ENCODE measurements at regions of chr15 and their contacts with region 1.

Region 1: DNA sequence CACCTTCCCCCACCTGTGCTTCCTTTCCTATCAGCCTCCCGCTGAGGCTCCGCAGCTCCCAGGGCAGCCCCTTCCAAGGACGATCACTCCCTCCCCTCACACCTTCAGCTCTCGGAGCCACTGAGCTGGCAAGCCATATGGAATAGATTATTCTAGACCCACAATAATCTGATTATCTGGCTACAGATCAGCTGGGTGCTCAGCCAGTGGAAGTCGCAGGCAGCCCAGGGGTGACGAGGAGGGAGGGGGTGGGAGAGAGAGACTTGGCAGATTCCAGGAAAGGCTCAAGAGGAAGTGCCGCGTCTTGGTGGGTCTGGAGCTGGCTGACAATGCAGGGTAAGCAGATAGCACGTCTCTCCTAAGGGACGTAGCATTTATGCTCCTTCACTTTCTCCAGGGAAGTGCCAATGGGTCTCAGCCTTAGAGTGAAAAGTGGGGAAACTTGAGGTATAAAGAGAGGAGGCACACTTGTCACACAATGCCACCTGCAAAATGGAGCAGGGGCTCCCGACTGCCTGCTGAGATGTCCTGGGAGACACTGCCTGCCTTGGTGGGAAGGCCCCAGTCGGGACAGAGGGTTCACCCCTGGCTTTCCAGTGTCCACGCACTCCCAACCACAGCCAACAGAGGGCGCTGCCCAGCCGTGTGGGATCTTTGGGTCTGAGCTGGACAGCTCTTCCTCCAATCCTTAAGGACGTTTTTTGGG is 9.4 kb upstream of the MESP1 start:
- DNase-seq: peak; percentile 72 to 90 (median 81)
- H3K4me3 ChIP-seq: no peak overlapping the region
- H3K27ac ChIP-seq: no peak overlapping the region
- H3K4me1 ChIP-seq: no peaks in the 10 kb centered on the region
- H3K27me3 ChIP-seq: no peaks in the 10 kb centered on the region
- CTCF ChIP-seq: peak; percentile 91 to 96 (median 94)
- POLR2A ChIP-seq: no peak

Region 2: DNA sequence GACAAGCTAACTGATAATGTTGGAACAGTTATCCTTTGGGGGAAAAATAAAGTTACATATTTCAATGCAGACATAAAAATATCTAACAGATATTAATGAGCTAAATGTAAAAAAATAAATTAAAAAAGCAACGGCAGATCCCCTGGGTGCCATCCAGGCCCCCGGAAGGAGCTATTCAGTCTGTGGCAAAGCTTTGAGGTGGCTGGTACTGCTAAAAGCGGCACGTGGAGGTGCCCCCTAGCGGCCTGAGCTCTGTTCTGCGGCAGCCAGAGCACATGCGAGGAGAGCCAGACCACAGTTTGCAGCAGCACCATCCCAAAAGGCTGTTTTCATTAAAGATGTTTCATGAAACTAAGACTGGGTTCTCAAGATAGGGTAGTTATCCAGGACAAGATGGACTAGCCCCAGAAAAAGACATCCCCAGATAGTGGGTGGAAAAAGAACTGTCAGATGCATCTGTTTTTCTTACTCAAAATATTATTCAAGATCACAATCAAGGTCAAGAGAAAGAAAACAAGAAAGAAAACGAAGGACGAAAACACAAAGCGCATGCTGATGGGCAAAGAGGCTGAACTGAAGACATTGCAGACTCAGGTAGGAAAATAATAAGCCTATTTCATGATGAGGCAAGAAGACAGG is 114.6 kb after region 1 on chr15:
- intact Hi-C with region 1: loop called (anchors 2 to 5 kb)
- DNase-seq: peak; percentile 77 to 92 (median 85)
- H3K4me3 ChIP-seq: no peak overlapping the region
- H3K27ac ChIP-seq: no peak overlapping the region
- H3K4me1 ChIP-seq: no peaks in the 10 kb centered on the region
- H3K27me3 ChIP-seq: no peaks in the 10 kb centered on the region
- CTCF ChIP-seq: peak; percentile 84 to 94 (median 90)
- POLR2A ChIP-seq: no peak